ENCODE measurements at regions of chr14 and their contacts with region 1.

Region 1: DNA sequence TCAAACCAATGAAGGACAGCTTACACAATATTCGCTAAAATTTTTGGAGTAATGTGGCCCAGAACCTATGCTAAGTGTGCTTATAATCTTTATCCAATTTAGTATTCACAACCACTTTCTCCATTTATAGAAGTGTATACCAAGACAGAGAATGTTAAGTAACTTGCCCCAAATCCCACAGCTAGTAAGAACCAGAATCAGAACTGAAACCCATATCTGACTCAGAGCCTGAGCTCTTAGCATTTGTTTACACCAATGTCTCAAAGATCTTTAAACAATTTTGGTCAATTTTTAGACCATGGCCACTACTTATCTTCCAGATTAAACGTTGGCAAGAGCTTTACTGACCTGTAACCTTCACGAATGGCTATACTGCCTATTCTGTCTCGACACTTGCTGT is 53.0 kb downstream of the PAPLN start:
- DNase-seq: peak; percentile 64
- ATAC-seq: peak; percentile 79
- H3K4me3 ChIP-seq: peak overlapping the region; percentile 22; the same call in 1 of the 2 replicates
- H3K27ac ChIP-seq: peak overlapping the region; percentile 55; the same call in 1 of the 2 replicates
- H3K4me1 ChIP-seq: peaks cover 35% of the 10 kb centered on the region
- H3K27me3 ChIP-seq: no peaks in the 10 kb centered on the region
- CTCF ChIP-seq: no peak
- EP300 ChIP-seq: peak; percentile 32 to 89; a peak in 3 of 4 replicates
- POLR2A ChIP-seq: no peak
- RAD21 ChIP-seq: no peak

Region 2: DNA sequence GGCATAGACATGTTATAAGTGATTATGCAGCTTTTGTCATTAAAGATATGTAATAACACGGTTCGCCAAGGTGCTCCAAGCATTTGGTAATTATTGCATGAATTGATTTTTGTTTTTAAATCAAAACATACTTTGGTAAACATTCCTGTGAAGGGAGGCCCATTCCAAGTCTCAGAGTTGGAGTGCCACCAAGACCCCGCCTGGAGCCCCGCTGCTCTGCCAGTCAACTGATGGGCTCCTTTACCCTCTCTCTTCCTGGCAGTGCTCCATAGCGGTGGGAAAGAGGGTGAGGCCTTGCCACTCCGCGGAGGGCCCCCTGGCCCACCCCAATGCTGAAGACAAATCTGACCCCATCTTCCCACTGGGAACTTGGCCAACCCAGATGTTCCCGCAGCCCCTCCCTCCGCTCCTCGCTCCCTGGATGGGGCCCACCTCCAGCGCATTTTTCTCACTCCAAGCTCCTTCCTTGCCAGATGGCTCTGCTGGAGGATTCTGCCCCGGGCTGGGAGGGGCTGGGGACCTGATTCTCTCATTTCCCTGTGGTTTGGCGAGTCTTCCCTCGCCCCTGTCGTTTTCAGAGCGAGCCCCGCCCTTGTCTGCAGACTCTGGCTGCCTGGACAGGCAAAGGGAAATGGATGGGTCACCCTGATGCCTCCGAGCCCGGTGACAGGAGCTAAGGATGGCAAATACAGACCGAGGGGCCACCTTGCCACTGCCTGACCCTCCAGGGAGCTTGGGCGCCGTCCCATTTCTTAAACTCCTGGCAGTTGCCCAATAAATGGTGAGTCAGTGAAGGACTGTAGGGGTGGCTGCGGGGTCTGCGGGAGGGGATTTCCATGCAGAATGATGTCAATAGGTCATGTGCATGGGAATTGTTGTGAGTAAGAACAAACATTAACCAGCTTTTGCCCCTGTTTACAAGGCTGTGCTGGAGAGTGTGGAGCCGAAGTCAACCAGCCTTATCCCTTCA is 62.2 kb before region 1 on chr14:
- CTCF ChIA-PET with region 1: interaction called, 28 read pairs
- POLR2A ChIA-PET with region 1: no interaction called
- RAD21 ChIA-PET with region 1: interaction called, 17 read pairs
- SMC1A ChIA-PET with region 1: interaction called, 15 read pairs
- in situ Hi-C with region 1: no loop called
- intact Hi-C with region 1: no loop called
- DNase-seq: no peak
- ATAC-seq: peak; percentile 24
- H3K4me3 ChIP-seq: no peak overlapping the region
- H3K27ac ChIP-seq: no peak overlapping the region
- H3K4me1 ChIP-seq: peaks cover 8% of the 10 kb centered on the region
- H3K27me3 ChIP-seq: no peaks in the 10 kb centered on the region
- CTCF ChIP-seq: no peak
- EP300 ChIP-seq: no peak
- POLR2A ChIP-seq: no peak
- RAD21 ChIP-seq: no peak

Region 3: GRCh38 chr14:73269729-73270531 is 20.3 kb before region 1 on chr14:
- CTCF ChIA-PET with region 1: interaction called, 10 read pairs
- POLR2A ChIA-PET with region 1: interaction called, 11 read pairs
- RAD21 ChIA-PET with region 1: interaction called, 20 read pairs
- SMC1A ChIA-PET with region 1: interaction called, 42 read pairs
- in situ Hi-C with region 1: no loop called
- intact Hi-C with region 1: no loop called
- DNase-seq: no peak
- ATAC-seq: peak; percentile 97
- H3K4me3 ChIP-seq: peak overlapping the region; percentile 46; the same call in 1 of the 2 replicates
- H3K27ac ChIP-seq: peak overlapping the region; percentile 3; the same call in 1 of the 2 replicates
- H3K4me1 ChIP-seq: peaks cover 14% of the 10 kb centered on the region
- H3K27me3 ChIP-seq: no peaks in the 10 kb centered on the region
- CTCF ChIP-seq: no peak
- EP300 ChIP-seq: 0 out of 4 replicates have a peak, but pooled peaks of 1 of the 2 experiments have one; percentile 21
- POLR2A ChIP-seq: no peak; the same call in 1 of the 2 replicates
- RAD21 ChIP-seq: no peak

Region 4: DNA sequence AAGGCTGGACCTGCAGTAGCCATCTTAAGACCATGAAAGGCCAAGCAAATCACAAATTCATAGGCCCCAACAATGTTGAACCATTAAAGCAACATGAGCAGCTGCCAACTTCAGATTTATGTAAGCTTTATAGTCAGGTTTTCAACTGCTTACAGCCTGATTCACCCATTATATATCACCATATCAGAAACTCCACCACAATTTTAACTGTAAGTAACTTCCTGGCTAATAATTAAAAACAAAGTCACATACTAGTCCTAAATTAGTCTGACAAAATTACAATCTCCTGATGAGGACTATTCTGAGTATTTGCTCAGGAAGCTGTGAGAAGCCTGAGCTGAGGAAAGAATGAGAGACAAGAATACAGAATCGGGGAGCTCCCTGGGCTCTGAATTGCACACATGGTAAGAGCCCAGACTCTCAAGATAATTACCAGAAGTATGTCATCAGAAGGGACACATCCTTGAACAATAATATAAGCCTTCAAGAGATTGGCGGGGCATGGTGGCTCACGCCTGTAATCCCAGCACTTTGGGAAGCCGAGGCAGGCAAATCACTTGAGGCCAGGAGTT is 113.0 kb after region 1 on chr14:
- CTCF ChIA-PET with region 1: interaction called, 28 read pairs
- POLR2A ChIA-PET with region 1: interaction called, 6 read pairs
- RAD21 ChIA-PET with region 1: interaction called, 41 read pairs
- SMC1A ChIA-PET with region 1: interaction called, 55 read pairs
- in situ Hi-C with region 1: no loop called
- intact Hi-C with region 1: no loop called
- DNase-seq: no peak
- ATAC-seq: peak; percentile 23
- H3K4me3 ChIP-seq: no peak overlapping the region
- H3K27ac ChIP-seq: peak overlapping the region; percentile 45
- H3K4me1 ChIP-seq: peaks cover 28% of the 10 kb centered on the region
- H3K27me3 ChIP-seq: no peaks in the 10 kb centered on the region
- CTCF ChIP-seq: no peak
- EP300 ChIP-seq: no peak
- POLR2A ChIP-seq: no peak
- RAD21 ChIP-seq: no peak

Region 5: DNA sequence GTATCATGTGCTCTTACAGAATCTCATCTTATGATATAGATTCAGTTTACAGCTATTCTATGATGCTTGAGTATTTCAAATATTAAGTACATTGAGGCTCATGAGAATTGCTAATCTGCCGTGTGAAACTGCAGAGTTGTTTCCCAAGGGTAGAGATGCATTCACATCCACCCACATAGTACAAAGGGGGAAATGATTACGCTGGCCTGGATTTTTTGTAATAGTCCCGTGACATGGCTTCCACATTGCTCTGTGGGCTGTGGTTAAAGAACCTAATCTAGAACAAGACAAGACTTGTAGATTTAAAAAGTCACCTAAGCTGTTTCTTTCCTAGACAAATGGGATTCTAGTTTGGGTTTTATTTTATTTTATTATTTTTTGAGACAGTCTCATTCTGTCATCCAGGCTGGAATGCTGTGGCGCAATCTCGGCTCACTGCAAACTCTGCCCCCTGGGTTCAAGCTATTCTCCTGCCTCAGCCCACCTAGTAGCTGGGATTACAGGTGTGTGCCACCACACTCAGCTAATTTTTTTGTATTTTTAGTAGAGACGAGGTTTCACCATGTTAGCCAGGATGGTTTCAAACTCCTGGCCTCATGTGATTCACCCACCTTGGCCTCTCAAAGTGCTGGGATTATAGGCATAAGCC is 187.5 kb after region 1 on chr14:
- CTCF ChIA-PET with region 1: interaction called, 252 read pairs
- POLR2A ChIA-PET with region 1: interaction called, 18 read pairs
- RAD21 ChIA-PET with region 1: interaction called, 591 read pairs
- SMC1A ChIA-PET with region 1: interaction called, 311 read pairs
- in situ Hi-C with region 1: no loop called
- intact Hi-C with region 1: loop called (anchors 1 kb)
- DNase-seq: peak; percentile 90
- ATAC-seq: peak; percentile 88
- H3K4me3 ChIP-seq: no peak overlapping the region
- H3K27ac ChIP-seq: peak overlapping the region; percentile 68
- H3K4me1 ChIP-seq: peaks cover 17% of the 10 kb centered on the region
- H3K27me3 ChIP-seq: no peaks in the 10 kb centered on the region
- CTCF ChIP-seq: no peak
- EP300 ChIP-seq: peak; percentile 73 to 89; a peak in 2 of 4 replicates
- POLR2A ChIP-seq: no peak
- RAD21 ChIP-seq: peak; percentile 24; the same call in 1 of the 2 replicates